Esophagus muscularis mucosa (tissue), 4 donors: ENCODE measurements at regions of chr2 and their contacts with region 1.

Region 1: DNA sequence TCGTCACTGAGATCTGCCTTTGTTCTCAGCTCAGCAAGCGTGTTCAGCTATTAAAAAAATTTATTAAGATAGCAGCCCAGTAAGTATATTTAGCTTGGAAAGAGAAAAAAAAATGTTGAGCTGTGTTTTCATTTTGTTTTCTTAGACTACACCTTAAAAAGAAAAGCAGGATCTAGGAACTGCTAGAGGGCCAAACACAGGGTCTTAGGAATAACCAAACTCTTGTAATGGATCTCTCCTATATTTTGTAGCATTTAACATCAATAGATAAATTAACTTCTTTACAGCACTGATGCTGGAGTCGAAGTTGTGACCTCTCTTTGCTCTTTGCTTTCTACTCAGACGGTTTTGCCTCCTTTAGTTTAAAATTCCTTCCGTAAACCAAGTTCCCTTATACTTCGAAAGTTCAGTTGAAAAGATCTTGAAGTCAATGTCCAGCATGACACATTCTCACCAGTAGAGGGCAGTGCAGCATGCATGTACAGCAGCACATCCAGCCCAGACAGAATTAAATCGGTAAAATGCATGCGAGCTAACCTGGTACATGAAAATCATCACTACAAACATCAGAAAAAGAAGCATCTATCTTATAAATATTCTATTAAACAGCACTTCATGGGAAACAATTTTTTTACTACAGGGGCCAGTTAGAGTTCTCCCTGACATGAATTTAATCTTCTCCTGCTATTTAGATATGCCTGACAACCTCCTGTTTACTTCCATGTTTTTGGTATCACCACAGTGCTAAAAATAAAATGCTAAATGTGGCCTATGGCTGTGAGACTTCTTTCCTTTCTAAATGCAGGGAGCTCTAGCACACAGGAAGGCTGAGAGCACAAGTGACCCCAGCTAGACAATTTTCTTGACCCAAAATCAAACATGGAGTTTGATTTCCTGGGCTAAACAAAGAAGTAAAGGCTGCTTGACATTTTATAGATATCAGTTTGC is 48.2 kb upstream of the MAP3K20 start:
- DNase-seq: peak; percentile 96
- H3K4me3 ChIP-seq: no peak overlapping the region
- H3K27ac ChIP-seq: peak overlapping the region; percentile 54 to 80 (median 74)
- H3K4me1 ChIP-seq: peaks cover 18 to 29% (median 26%) of the 10 kb centered on the region in 4 donors
- H3K27me3 ChIP-seq: no peaks in the 10 kb centered on the region
- CTCF ChIP-seq: peak; percentile 92 to 97 (median 94)
- EP300 ChIP-seq: no peak
- POLR2A ChIP-seq: no peak

Region 2: DNA sequence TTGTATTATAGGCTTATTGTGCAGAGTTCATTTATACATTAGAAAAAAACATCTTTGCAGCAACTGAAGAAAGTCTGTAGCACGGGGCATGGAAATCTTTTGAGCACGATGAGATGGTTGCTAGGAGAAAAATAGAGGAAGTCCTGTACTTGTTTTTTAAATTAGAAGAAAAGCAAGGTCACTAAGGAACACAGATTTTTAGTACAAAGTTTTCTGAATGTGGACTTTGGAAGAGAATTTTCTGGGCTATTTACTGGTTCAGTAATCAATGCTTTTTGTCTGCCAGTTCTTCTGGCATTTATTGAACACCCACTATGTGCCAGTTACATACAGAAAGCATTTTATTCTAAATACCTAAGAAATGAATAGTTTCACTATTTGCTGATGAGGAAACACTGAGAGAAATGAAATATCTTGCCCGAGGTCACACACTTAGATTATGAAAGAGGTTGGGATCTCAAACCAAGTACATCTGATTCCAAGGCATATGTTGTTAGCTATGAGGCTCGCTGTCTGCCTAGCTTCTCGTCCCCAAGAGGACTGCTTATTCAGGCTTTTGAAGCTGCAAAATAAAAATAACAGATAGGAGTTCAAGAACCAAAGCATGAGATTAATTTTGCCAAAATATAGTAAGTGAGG is 32.6 kb after region 1 on chr2:
- intact Hi-C with region 1: no loop called
- DNase-seq: no peak
- H3K4me3 ChIP-seq: no peak overlapping the region
- H3K27ac ChIP-seq: no peak overlapping the region
- H3K4me1 ChIP-seq: peaks cover 0 to 11% (median 0%) of the 10 kb centered on the region in 4 donors
- H3K27me3 ChIP-seq: no peaks in the 10 kb centered on the region
- CTCF ChIP-seq: no peak
- EP300 ChIP-seq: no peak
- POLR2A ChIP-seq: no peak

Region 3: GRCh38 chr2:173075781-173076580 is 48.5 kb after region 1 on chr2 and contains the start of gene MAP3K20:
- intact Hi-C with region 1: loop called (anchors 5 kb)
- DNase-seq: no peak
- H3K4me3 ChIP-seq: peak within 1 kb of the TSS; percentile 72 to 89 (median 84)
- H3K27ac ChIP-seq: peak within 1 kb of the TSS; percentile 92 to 99 (median 98)
- H3K4me1 ChIP-seq: peaks cover 16 to 58% (median 48%) of the 10 kb centered on the region in 4 donors
- H3K27me3 ChIP-seq: no peaks in the 10 kb centered on the region
- CTCF ChIP-seq: peak; percentile 59 to 71 (median 67)
- EP300 ChIP-seq: no peak
- POLR2A ChIP-seq: peak; percentile 68
- total RNA-seq, gene MAP3K20: 238 to 335 (median 267) TPM